Activated CD4-positive, alpha-beta T cell treated with anti-CD3 and anti-CD28 coated beads, Interleukin-2, amount 10 ng/mL, durations not matched to agents 7 days and 5 days (primary cell): ENCODE measurements at regions of chr2 and their contacts with region 1.

Region 1: DNA sequence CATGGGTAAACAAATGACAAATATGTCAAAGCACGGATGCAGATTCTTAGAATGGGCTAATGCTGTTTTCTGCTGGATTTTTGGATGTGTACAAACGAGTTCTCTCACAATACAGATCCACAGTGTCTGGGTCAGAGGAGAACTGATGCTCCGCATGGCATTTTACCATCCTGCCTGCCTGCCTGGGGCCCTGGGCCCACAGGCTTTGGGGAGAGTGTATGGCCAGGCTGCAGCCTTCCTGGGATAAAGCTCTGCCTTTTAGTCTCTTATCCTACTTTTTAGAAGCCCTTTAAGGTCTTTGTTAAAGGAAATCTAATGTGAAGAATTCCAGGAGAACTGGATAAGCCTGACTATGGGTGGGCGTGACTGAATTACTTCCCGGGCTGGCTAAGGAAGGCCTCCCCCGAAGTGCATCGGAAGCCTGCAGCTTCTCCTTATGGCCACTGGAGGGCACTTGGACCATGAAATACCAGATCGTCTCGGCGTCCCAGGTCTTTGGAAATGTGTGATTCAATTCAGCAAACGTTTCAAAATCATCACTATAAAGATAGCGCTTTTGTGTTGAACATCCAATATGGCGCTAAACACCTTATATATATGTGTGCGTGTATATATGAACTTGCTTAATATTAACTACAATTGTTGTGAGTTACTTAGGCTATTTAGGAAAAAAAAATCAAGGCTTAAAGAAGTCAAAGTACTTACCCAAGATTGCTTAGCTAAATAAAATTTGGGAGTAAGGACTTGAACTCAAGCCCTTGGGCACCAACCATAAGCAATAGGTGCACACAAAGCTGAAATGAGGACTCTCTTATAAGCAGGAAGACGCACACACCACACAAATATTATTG is 15.2 kb upstream of the DNPEP start:
- DNase-seq: peak; percentile 65
- H3K4me3 Mint-ChIP-seq: no peak overlapping the region
- H3K27ac Mint-ChIP-seq: no peak overlapping the region
- H3K4me1 Mint-ChIP-seq: no peaks in the 10 kb centered on the region
- H3K27me3 Mint-ChIP-seq: peaks cover 4% of the 10 kb centered on the region

Region 2: GRCh38 chr2:219388127-219388844 is 14.6 kb before region 1 on chr2:
- CTCF ChIA-PET with region 1: interaction called, 16 read pairs
- POLR2A ChIA-PET with region 1: no interaction called
- DNase-seq: peak; percentile 97
- H3K4me3 Mint-ChIP-seq: peak overlapping the region; percentile 96
- H3K27ac Mint-ChIP-seq: peak overlapping the region; percentile 90
- H3K4me1 Mint-ChIP-seq: peaks cover 17% of the 10 kb centered on the region
- H3K27me3 Mint-ChIP-seq: peaks cover 3% of the 10 kb centered on the region